ENCODE measurements at regions of chr13 and their contacts with region 1.

Region 1: GRCh38 chr13:95185851-95186250 is 115.4 kb downstream of the ABCC4 start:
- DNase-seq: peak in 1 of 2 donors; percentile 84
- ATAC-seq: peak; percentile 81 to 87 (median 86)
- H3K4me3 ChIP-seq: peak overlapping the region; percentile 8
- H3K4me3 Mint-ChIP-seq: peak overlapping the region; percentile 86
- H3K27ac ChIP-seq: peak overlapping the region; percentile 50
- H3K27ac Mint-ChIP-seq: peak overlapping the region; percentile 85 to 88
- H3K4me1 ChIP-seq: peaks cover 13% of the 10 kb centered on the region
- H3K4me1 Mint-ChIP-seq: peaks cover 32 to 36% of the 10 kb centered on the region in 2 donors
- H3K27me3 ChIP-seq: no peaks in the 10 kb centered on the region
- H3K27me3 Mint-ChIP-seq: no peaks in the 10 kb centered on the region
- CTCF ChIP-seq: no peak

Region 2: GRCh38 chr13:94811753-94812152 is 374.1 kb before region 1 on chr13:
- intact Hi-C with region 1: no loop called
- DNase-seq: no peak
- ATAC-seq: no peak
- H3K4me3 ChIP-seq: no peak overlapping the region
- H3K4me3 Mint-ChIP-seq: no peak overlapping the region
- H3K27ac ChIP-seq: no peak overlapping the region
- H3K27ac Mint-ChIP-seq: no peak overlapping the region
- H3K4me1 ChIP-seq: no peaks in the 10 kb centered on the region
- H3K4me1 Mint-ChIP-seq: no peaks in the 10 kb centered on the region
- H3K27me3 ChIP-seq: no peaks in the 10 kb centered on the region
- H3K27me3 Mint-ChIP-seq: no peaks in the 10 kb centered on the region
- CTCF ChIP-seq: no peak

Region 3: GRCh38 chr13:94988654-94989053 is 197.2 kb before region 1 on chr13:
- intact Hi-C with region 1: no loop called
- DNase-seq: no peak
- ATAC-seq: no peak
- H3K4me3 ChIP-seq: no peak overlapping the region
- H3K4me3 Mint-ChIP-seq: no peak overlapping the region
- H3K27ac ChIP-seq: no peak overlapping the region
- H3K27ac Mint-ChIP-seq: no peak overlapping the region
- H3K4me1 ChIP-seq: no peaks in the 10 kb centered on the region
- H3K4me1 Mint-ChIP-seq: no peaks in the 10 kb centered on the region
- H3K27me3 ChIP-seq: no peaks in the 10 kb centered on the region
- H3K27me3 Mint-ChIP-seq: peaks cover 0 to 6% of the 10 kb centered on the region in 2 donors
- CTCF ChIP-seq: no peak

Region 4: GRCh38 chr13:95003019-95003813 is 182.6 kb before region 1 on chr13:
- intact Hi-C with region 1: no loop called
- DNase-seq: no peak
- ATAC-seq: no peak
- H3K4me3 ChIP-seq: no peak overlapping the region
- H3K4me3 Mint-ChIP-seq: no peak overlapping the region
- H3K27ac ChIP-seq: no peak overlapping the region
- H3K27ac Mint-ChIP-seq: no peak overlapping the region
- H3K4me1 ChIP-seq: no peaks in the 10 kb centered on the region
- H3K4me1 Mint-ChIP-seq: no peaks in the 10 kb centered on the region
- H3K27me3 ChIP-seq: peaks cover 5% of the 10 kb centered on the region
- H3K27me3 Mint-ChIP-seq: peaks cover 18 to 27% of the 10 kb centered on the region in 2 donors
- CTCF ChIP-seq: no peak

Region 5: GRCh38 chr13:95228130-95228529 is 42.3 kb after region 1 on chr13:
- intact Hi-C with region 1: loop called (anchors 1 kb)
- DNase-seq: no peak
- ATAC-seq: no peak
- H3K4me3 ChIP-seq: no peak overlapping the region
- H3K4me3 Mint-ChIP-seq: no peak overlapping the region
- H3K27ac ChIP-seq: no peak overlapping the region
- H3K27ac Mint-ChIP-seq: no peak overlapping the region
- H3K4me1 ChIP-seq: peaks cover 12% of the 10 kb centered on the region
- H3K4me1 Mint-ChIP-seq: peaks cover 7 to 8% of the 10 kb centered on the region in 2 donors
- H3K27me3 ChIP-seq: no peaks in the 10 kb centered on the region
- H3K27me3 Mint-ChIP-seq: no peaks in the 10 kb centered on the region
- CTCF ChIP-seq: no peak

Region 6: GRCh38 chr13:95479731-95480130 is 293.9 kb after region 1 on chr13:
- intact Hi-C with region 1: loop called (anchors 2 kb)
- DNase-seq: no peak
- ATAC-seq: no peak
- H3K4me3 ChIP-seq: no peak overlapping the region
- H3K4me3 Mint-ChIP-seq: no peak overlapping the region
- H3K27ac ChIP-seq: no peak overlapping the region
- H3K27ac Mint-ChIP-seq: peak overlapping the region in 1 of 2 donors; percentile 13
- H3K4me1 ChIP-seq: peaks cover 9% of the 10 kb centered on the region
- H3K4me1 Mint-ChIP-seq: peaks cover 0 to 12% of the 10 kb centered on the region in 2 donors
- H3K27me3 ChIP-seq: no peaks in the 10 kb centered on the region
- H3K27me3 Mint-ChIP-seq: peaks cover 0 to 4% of the 10 kb centered on the region in 2 donors
- CTCF ChIP-seq: no peak

Region 7: DNA sequence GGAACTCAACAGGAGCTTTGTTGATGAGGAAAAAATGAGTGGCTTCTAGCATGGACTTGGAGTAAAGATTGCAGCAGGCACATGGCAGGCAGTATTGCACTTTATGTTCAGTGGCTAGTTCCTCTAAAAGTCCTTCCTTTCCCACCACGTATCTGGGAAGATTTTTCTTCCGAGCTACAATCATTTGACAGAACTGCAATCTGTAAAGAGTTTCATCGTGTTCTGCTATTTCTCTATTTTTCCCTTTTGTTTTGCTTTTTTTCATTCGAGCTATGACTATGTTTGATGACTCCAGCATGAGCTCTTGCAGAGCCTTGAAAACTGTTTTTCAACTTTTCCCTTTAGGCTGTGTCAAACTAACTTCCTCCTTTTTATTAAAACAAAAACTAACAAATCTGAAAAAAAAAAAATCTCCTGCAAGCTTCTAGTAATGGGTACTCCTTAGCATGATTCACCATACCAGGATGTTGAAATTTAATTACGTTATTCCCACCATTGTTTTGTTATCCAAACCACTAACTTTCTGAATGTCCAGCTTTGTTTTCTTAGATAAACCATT is 379.0 kb after region 1 on chr13:
- intact Hi-C with region 1: no loop called
- DNase-seq: no peak
- ATAC-seq: no peak
- H3K4me3 ChIP-seq: no peak overlapping the region
- H3K4me3 Mint-ChIP-seq: no peak overlapping the region
- H3K27ac ChIP-seq: no peak overlapping the region
- H3K27ac Mint-ChIP-seq: no peak overlapping the region
- H3K4me1 ChIP-seq: no peaks in the 10 kb centered on the region
- H3K4me1 Mint-ChIP-seq: no peaks in the 10 kb centered on the region
- H3K27me3 ChIP-seq: no peaks in the 10 kb centered on the region
- H3K27me3 Mint-ChIP-seq: peaks cover 5 to 16% of the 10 kb centered on the region in 2 donors
- CTCF ChIP-seq: no peak